ENCODE measurements at regions of chr13 and their contacts with region 1.

Region 1: GRCh38 chr13:36346222-36347083 is at the start of gene SPART:
- DNase-seq: peak; percentile 82 to 91 (median 84)
- ATAC-seq: peak; percentile 89
- H3K4me3 ChIP-seq: peak within 1 kb of the TSS; percentile 68
- H3K27ac ChIP-seq: peak within 1 kb of the TSS; percentile 97
- H3K4me1 ChIP-seq: peaks cover 0 to 6% of the 10 kb centered on the region in 2 experiments; a peak in 3 of 5 replicates
- H3K27me3 ChIP-seq: no peaks in the 10 kb centered on the region
- CTCF ChIP-seq: peak; percentile 71 to 88 (median 87)
- EP300 ChIP-seq: no peak
- POLR2A ChIP-seq: peak; percentile 74
- RAD21 ChIP-seq: peak; percentile 58 to 63
- polyA plus RNA-seq, gene SPART: 18.7 to 32.0 TPM

Region 2: DNA sequence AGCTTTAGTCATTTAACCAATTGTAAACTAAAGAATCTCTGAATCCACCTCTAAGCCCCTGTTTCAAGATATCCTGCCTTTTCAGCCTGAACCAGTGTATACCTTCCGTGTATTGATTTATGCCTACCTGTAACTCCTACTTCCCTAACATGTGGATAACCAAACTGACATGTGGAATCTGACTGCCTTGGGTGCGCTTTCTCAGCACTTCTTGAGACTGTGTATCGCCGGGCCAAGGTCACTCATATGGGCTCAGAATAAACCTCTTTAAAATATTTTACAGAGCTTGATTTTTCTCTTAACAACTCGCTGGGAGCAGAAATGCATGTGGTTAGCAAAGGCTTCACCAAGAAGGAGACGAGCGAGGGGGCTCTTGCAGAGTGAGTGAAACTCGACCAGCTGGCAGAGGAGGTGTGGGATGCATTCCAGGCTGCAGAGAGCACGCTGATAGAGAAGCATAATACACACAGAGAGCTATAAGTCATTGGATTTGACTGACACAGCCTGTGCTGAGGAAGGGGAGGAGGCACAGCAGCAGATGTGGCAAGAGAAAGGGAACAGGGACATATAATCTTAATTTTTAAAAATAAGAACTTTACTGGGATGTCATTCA is 601.8 kb before region 1 on chr13:
- CTCF ChIA-PET with region 1: no interaction called
- POLR2A ChIA-PET with region 1: no interaction called
- in situ Hi-C with region 1: no loop called
- intact Hi-C with region 1: no loop called
- DNase-seq: no peak
- ATAC-seq: no peak
- H3K4me3 ChIP-seq: no peak overlapping the region
- H3K27ac ChIP-seq: no peak overlapping the region
- H3K4me1 ChIP-seq: no peaks in the 10 kb centered on the region
- H3K27me3 ChIP-seq: no peaks in the 10 kb centered on the region
- CTCF ChIP-seq: no peak
- EP300 ChIP-seq: no peak
- POLR2A ChIP-seq: no peak
- RAD21 ChIP-seq: no peak

Region 3: DNA sequence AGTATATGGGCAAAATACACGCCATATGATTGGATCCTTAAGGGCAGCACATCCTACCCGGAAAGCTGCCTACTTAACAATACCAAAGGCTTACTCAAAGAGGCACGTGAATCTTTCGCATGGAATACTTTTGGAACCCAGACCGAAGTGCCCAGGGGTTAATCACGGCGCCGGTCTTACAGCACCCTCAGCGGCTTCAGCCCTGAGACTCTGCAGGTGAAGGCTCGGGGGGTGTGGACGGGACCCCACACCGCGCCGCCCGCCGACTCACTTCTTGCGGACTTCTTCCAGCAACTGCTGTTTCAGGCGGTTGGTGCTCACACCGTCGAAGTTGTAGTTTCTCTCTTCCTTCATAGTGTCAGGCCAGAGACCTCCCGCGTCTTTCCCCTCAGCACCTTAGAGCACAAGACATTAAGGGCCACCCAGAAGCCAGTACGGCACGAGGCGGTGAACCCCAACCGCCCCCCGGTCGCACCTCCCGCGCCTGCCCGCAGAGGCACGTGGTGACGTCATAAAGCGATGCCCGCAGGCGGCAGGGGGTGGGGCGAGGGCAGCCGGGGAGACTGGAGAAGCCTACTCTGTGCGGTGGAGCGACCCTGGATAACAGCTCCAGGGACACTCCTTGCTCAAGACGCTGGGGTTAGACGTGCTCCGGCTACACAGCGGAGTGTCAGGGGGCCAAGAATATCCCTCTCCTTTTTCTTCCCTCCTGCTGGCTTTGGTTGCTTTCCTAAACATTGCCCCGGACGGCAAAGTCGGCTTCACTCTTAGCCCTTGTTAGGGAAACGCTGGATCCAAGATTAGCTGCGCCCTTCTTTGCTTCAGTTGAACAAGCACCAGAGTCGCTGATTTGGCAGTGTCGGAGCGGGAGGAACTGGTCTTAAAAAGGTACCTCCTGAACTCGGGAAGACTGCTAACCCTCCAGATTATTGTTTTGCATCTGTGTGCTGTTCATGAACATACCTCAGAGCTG is 48.8 kb before region 1 on chr13 and contains the start of gene CCDC169:
- CTCF ChIA-PET with region 1: no interaction called
- POLR2A ChIA-PET with region 1: no interaction called
- in situ Hi-C with region 1: no loop called
- intact Hi-C with region 1: loop called (anchors 2 kb)
- DNase-seq: peak; percentile 73 to 84 (median 79)
- ATAC-seq: peak; percentile 92
- H3K4me3 ChIP-seq: peak within 1 kb of the TSS; percentile 81
- H3K27ac ChIP-seq: peak within 1 kb of the TSS; percentile 82
- H3K4me1 ChIP-seq: peaks cover 0 to 5% of the 10 kb centered on the region in 2 experiments; a peak in 1 of 5 replicates
- H3K27me3 ChIP-seq: no peaks in the 10 kb centered on the region
- CTCF ChIP-seq: no peak
- EP300 ChIP-seq: no peak
- POLR2A ChIP-seq: peak; percentile 84
- RAD21 ChIP-seq: no peak
- polyA plus RNA-seq, gene CCDC169: 18.9 to 22.0 TPM

Region 4: GRCh38 chr13:36395280-36395679 is 48.8 kb after region 1 on chr13:
- CTCF ChIA-PET with region 1: interaction called, 3 read pairs
- POLR2A ChIA-PET with region 1: interaction called, 3 read pairs
- in situ Hi-C with region 1: no loop called
- intact Hi-C with region 1: loop called (anchors 5 kb)
- DNase-seq: peak in 2 of 4 experiments; percentile 3 to 13
- ATAC-seq: peak; percentile 64
- H3K4me3 ChIP-seq: no peak overlapping the region
- H3K27ac ChIP-seq: no peak overlapping the region
- H3K4me1 ChIP-seq: no peaks in the 10 kb centered on the region
- H3K27me3 ChIP-seq: no peaks in the 10 kb centered on the region
- CTCF ChIP-seq: peak in 2 of 3 experiments; percentile 12 to 42; a peak in 2 of 6 replicates
- EP300 ChIP-seq: no peak
- POLR2A ChIP-seq: no peak
- RAD21 ChIP-seq: peak in 1 of 2 experiments; percentile 48; a peak in 2 of 4 replicates

Region 5: DNA sequence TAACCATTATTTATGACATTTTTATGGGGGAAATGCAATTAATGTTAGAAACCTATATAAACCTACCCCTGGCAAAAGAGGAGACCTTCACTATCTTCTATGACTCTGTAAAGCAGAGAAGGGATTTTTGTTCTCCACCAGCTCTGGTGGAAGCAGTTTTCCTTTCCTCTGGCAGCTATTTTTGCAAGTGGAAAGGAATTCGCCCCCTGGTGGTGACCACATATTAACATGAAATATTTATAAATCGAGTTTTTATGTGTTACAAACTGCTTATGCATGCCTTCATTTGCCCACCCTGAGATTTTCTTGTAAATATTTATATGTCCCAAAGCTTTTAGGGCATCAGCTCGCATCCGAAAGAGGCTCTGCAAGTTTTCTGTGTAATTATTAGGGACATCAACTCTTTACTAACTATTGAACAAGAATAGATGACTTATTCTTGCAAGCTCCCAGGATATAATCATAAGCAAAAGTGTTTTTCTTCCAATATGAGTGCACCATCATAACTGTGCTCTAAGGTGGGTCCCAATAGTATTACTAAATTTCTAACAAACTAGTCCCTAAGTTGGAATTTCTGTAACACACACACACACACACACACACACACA is 389.8 kb after region 1 on chr13:
- CTCF ChIA-PET with region 1: no interaction called
- POLR2A ChIA-PET with region 1: no interaction called
- in situ Hi-C with region 1: no loop called
- intact Hi-C with region 1: loop called (anchors 2 kb)
- DNase-seq: peak; percentile 30 to 57 (median 36)
- ATAC-seq: no peak
- H3K4me3 ChIP-seq: no peak overlapping the region
- H3K27ac ChIP-seq: no peak overlapping the region
- H3K4me1 ChIP-seq: no peaks in the 10 kb centered on the region
- H3K27me3 ChIP-seq: no peaks in the 10 kb centered on the region
- CTCF ChIP-seq: peak; percentile 37 to 64 (median 40); a peak in 4 of 6 replicates
- EP300 ChIP-seq: no peak
- POLR2A ChIP-seq: no peak
- RAD21 ChIP-seq: peak; percentile 33 to 46; a peak in 2 of 4 replicates

Region 6: GRCh38 chr13:36818804-36819738 is 472.6 kb after region 1 on chr13 and contains the start of gene RFXAP:
- CTCF ChIA-PET with region 1: no interaction called
- POLR2A ChIA-PET with region 1: interaction called, 3 read pairs
- in situ Hi-C with region 1: no loop called
- intact Hi-C with region 1: loop called (anchors 10 kb)
- DNase-seq: peak; percentile 89 to 93 (median 91)
- ATAC-seq: peak; percentile 89
- H3K4me3 ChIP-seq: peak within 1 kb of the TSS; percentile 78
- H3K27ac ChIP-seq: peak within 1 kb of the TSS; percentile 69
- H3K4me1 ChIP-seq: peaks cover 8 to 17% of the 10 kb centered on the region in 2 experiments; a peak in 4 of 5 replicates
- H3K27me3 ChIP-seq: no peaks in the 10 kb centered on the region
- CTCF ChIP-seq: no peak
- EP300 ChIP-seq: no peak
- POLR2A ChIP-seq: peak; percentile 50; the same call in 1 of the 2 replicates
- RAD21 ChIP-seq: no peak
- polyA plus RNA-seq, gene RFXAP: 2.1 to 2.7 TPM

Measured in K562 (cell line).